ENCODE measurements at regions of chr9 and their contacts with region 1.

Region 1: DNA sequence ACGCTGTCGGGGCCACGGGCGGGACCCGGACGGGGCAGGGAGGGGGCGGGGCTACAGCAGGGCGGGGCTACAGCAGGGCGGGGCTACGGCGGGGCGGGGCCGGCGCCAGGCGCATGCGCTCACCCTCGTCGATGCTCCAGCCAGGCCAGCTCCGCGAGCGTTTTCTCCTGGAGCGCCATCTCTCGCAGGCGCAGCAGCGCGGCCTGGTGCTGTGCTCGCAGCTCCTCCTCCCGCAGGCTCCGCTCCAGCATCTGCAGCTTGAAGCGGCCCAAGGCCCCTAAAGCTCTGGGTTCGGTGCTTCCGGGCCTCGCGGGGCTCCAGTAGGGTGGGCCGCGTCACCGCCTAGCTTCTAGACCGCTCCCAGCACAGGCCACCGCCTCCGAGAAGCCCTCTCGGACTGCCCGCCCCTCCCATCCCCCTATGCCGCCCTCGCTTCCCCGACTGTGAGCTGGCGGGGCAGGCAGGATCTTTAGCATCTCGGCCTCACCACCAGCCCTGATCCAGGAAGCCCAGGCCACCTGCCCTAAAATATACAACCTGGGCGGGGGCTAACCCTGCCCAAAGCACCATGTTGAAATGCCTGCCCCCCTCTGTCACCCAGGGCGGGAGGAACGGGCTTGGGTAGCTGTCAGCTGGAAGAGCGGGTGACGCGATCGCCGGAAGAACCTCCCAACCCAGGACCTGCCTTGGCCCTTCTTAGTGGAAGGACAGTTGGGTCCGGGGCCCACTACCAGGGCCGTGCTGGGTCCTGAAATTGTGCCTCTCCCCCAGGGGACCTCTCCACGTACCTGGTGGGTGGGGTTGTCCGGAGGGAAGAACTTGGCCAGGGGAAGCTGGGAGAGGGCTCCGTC is 21.9 kb upstream of the QSOX2 start:
- DNase-seq: peak; percentile 86 to 90 (median 88)
- H3K4me3 ChIP-seq: peak overlapping the region in 6 of 7 experiments; percentile 26 to 75 (median 60)
- H3K27ac ChIP-seq: no peak overlapping the region
- H3K4me1 ChIP-seq: peaks cover 0 to 10% (median 8%) of the 10 kb centered on the region in 4 experiments
- H3K27me3 ChIP-seq: no peaks in the 10 kb centered on the region

Region 2: GRCh38 chr9:136170006-136170901 is 97.2 kb before region 1 on chr9:
- CTCF ChIA-PET with region 1: interaction called, 15 read pairs
- POLR2A ChIA-PET with region 1: no interaction called
- DNase-seq: peak; percentile 30 to 62 (median 51)
- H3K4me3 ChIP-seq: no peak overlapping the region
- H3K27ac ChIP-seq: no peak overlapping the region
- H3K4me1 ChIP-seq: no peaks in the 10 kb centered on the region
- H3K27me3 ChIP-seq: peaks cover 0 to 15% (median 0%) of the 10 kb centered on the region in 5 experiments

Region 3: GRCh38 chr9:136277746-136278145 is 10.3 kb after region 1 on chr9:
- CTCF ChIA-PET with region 1: interaction called, 21 read pairs
- POLR2A ChIA-PET with region 1: no interaction called
- DNase-seq: no peak
- H3K4me3 ChIP-seq: no peak overlapping the region
- H3K27ac ChIP-seq: no peak overlapping the region
- H3K4me1 ChIP-seq: peaks cover 0 to 10% (median 3%) of the 10 kb centered on the region in 4 experiments
- H3K27me3 ChIP-seq: peaks cover 0 to 3% (median 0%) of the 10 kb centered on the region in 5 experiments

Region 4: GRCh38 chr9:136283291-136284235 is 16.1 kb after region 1 on chr9:
- CTCF ChIA-PET with region 1: interaction called, 21 read pairs
- POLR2A ChIA-PET with region 1: no interaction called
- DNase-seq: peak; percentile 78 to 89 (median 87)
- H3K4me3 ChIP-seq: peak overlapping the region in 2 of 7 experiments; percentile 19 to 55
- H3K27ac ChIP-seq: no peak overlapping the region
- H3K4me1 ChIP-seq: peaks cover 0 to 20% (median 6%) of the 10 kb centered on the region in 4 experiments
- H3K27me3 ChIP-seq: peaks cover 0 to 3% (median 0%) of the 10 kb centered on the region in 5 experiments

Region 5: GRCh38 chr9:136410500-136411287 is 143.2 kb after region 1 on chr9 and contains the starts of genes ENTR1 and PMPCA:
- CTCF ChIA-PET with region 1: no interaction called
- POLR2A ChIA-PET with region 1: no interaction called
- DNase-seq: peak; percentile 88 to 95 (median 94)
- H3K4me3 ChIP-seq: peak within 1 kb of the TSS; percentile 81 to 97 (median 90)
- H3K27ac ChIP-seq: peak within 1 kb of the TSS; percentile 89 to 97
- H3K4me1 ChIP-seq: peaks cover 2 to 28% (median 21%) of the 10 kb centered on the region in 4 experiments
- H3K27me3 ChIP-seq: no peaks in the 10 kb centered on the region

Measured in common myeloid progenitor, CD34-positive (primary cell).